Heart left ventricle (tissue), 16 donors: ENCODE measurements at regions of chr12 and their contacts with region 1.

Region 1: GRCh38 chr12:53659011-53659551 is 16.8 kb downstream of the ATP5MC2 start:
- DNase-seq: peak in 4 of 5 donors; percentile 49 to 62 (median 58)
- ATAC-seq: peak; percentile 76 to 92 (median 88)
- H3K4me3 ChIP-seq: peak overlapping the region in 6 of 12 donors; percentile 9 to 25 (median 18)
- H3K27ac ChIP-seq: peak overlapping the region; percentile 81 to 99 (median 90)
- H3K4me1 ChIP-seq: peaks cover 0 to 39% (median 31%) of the 10 kb centered on the region in 12 donors
- H3K27me3 ChIP-seq: no peaks in the 10 kb centered on the region
- CTCF ChIP-seq: no peak
- POLR2A ChIP-seq: no peak

Region 2: GRCh38 chr12:53625946-53626701 is 33.0 kb before region 1 on chr12 and contains the start of gene ATF7:
- intact Hi-C with region 1: loop called in 3 of 10 experiments (anchors 2 to 5 kb)
- DNase-seq: peak; percentile 98 to 99 (median 98)
- ATAC-seq: peak; percentile 98 to 99 (median 98)
- H3K4me3 ChIP-seq: peak within 1 kb of the TSS; percentile 49 to 94 (median 71)
- H3K27ac ChIP-seq: peak within 1 kb of the TSS; percentile 88 to 98 (median 96)
- H3K4me1 ChIP-seq: peaks cover 0 to 48% (median 29%) of the 10 kb centered on the region in 12 donors
- H3K27me3 ChIP-seq: no peaks in the 10 kb centered on the region
- CTCF ChIP-seq: peak in 1 of 12 donors; percentile 9
- POLR2A ChIP-seq: peak in 1 of 2 donors; percentile 76
- total RNA-seq, gene ATF7: 21.1 to 43.2 (median 32.0) TPM